A549 (cell line): ENCODE measurements at regions of chr2 and their contacts with region 1.

Region 1: GRCh38 chr2:234257856-234258561 is 207.5 kb downstream of the SPP2 start:
- DNase-seq: peak; percentile 94 to 97
- ATAC-seq: peak; percentile 99
- H3K4me3 ChIP-seq: no peak overlapping the region
- H3K27ac ChIP-seq: peak overlapping the region; percentile 93 to 95
- H3K4me1 ChIP-seq: peaks cover 51% of the 10 kb centered on the region
- CTCF ChIP-seq: peak; percentile 77
- EP300 ChIP-seq: peak; percentile 93 to 94
- POLR2A ChIP-seq: no peak
- RAD21 ChIP-seq: peak; percentile 93 to 95

Region 2: DNA sequence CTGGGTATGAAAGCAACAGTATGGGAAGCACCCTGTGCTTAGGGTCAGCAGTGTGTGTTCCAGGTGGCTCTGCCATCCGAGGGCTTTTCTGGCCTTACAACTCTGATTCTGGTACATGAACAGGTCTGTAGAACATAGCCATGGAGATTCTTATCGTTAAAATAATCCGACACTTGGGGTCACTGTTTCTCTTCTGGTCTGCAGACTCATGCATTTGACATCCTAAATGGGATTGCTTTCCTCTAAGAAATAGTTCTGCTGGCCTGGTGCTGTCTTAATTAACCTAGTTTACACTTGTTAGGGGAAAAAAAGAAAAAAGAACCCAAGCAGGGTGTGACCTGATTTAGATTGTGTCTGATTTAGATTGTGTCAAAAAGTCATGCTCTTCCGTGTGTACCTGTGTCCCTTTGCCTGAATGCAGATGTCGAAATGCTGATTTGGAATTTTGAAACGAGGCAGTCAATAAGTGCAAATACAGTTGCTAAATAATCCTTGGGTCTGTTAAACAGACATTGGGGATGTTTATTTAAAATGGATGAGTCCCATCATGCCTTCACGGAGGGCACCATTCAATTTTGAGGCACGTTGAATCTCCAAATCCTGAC is 281.2 kb before region 1 on chr2:
- CTCF ChIA-PET with region 1: interaction called, 15 read pairs
- POLR2A ChIA-PET with region 1: no interaction called
- DNase-seq: peak; percentile 64 to 84
- ATAC-seq: peak; percentile 44 to 80; a peak in 4 of 6 replicates
- H3K4me3 ChIP-seq: no peak overlapping the region
- H3K27ac ChIP-seq: peak overlapping the region; percentile 84 to 98
- H3K4me1 ChIP-seq: peaks cover 83% of the 10 kb centered on the region
- CTCF ChIP-seq: peak; percentile 94
- EP300 ChIP-seq: peak in 1 of 2 experiments; percentile 42; a peak in 2 of 5 replicates
- POLR2A ChIP-seq: no peak
- RAD21 ChIP-seq: peak; percentile 97 to 98

Region 3: DNA sequence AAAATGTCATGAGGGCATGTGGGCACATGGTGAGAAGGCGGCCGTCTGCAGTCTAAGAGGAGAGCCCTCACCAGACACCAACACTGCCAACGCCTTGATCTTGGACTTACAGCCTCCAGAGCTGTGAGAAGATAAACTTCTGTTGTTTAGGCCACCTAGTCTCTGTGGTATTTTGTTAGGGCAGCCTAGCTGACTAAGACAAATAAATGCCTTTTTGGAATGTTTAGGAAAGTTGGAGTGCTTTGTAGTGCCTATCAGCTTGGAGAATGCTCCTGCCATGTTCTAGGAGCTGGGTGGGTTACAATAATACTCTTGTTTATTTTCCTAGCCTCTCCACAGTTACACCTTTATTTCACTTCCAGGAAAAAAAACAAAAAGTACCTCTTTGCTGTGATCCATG is 115.5 kb before region 1 on chr2:
- CTCF ChIA-PET with region 1: interaction called, 11 read pairs
- POLR2A ChIA-PET with region 1: interaction called, 3 read pairs
- DNase-seq: no peak
- ATAC-seq: peak in 1 of 2 experiments; percentile 40; a peak in 2 of 6 replicates
- H3K4me3 ChIP-seq: no peak overlapping the region
- H3K27ac ChIP-seq: peak overlapping the region; percentile 32 to 67; a peak in 5 of 6 replicates
- H3K4me1 ChIP-seq: peaks cover 26% of the 10 kb centered on the region
- CTCF ChIP-seq: no peak
- EP300 ChIP-seq: no peak
- POLR2A ChIP-seq: no peak
- RAD21 ChIP-seq: no peak

Region 4: DNA sequence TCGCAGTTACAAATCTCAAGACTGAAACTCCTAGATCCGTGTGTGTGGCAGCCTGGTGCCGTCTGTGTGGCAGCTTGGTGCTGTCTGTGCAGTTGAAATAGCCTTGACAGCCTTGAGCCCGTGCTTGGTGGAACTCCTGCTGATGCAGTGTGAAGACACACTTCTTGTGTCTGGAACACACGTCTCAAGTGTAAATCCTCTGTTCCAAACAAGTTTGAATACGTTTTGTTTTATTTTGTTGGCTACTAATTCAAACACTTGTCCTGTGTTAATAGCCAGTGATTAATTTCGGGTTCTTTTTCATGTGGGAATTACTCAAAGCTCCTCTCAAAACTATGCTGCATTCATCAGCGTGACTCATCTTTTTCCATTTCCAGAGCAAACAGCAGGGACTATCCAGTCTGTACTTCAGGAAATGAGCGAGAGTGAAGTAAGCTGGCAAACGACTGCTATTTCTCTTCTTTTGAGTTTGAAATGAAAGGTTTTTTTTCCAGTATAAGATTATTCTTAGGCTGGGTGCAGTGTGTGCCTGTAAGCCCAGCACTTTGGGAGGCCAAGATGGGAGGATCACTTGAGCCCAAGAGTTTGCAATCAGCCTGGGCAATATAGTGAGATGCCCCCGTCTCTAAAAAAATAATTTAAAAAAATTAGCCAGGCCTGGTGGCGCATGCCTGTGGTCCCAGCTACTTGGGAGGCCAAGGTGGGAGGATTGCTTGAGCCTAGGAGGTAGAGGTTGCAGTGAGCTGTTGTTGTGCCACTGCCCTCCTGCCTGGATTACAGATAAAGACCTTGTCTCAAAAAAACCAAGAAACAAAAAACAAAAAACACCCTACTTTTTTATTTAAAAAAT is 54.6 kb before region 1 on chr2:
- CTCF ChIA-PET with region 1: interaction called, 12 read pairs
- POLR2A ChIA-PET with region 1: interaction called, 6 read pairs
- DNase-seq: peak; percentile 78 to 94
- ATAC-seq: peak; percentile 96 to 97
- H3K4me3 ChIP-seq: 0 out of 3 replicates have a peak overlapping the region, but pooled peaks have one; percentile 1
- H3K27ac ChIP-seq: peak overlapping the region; percentile 89 to 98
- H3K4me1 ChIP-seq: peaks cover 36% of the 10 kb centered on the region
- CTCF ChIP-seq: no peak
- EP300 ChIP-seq: peak; percentile 94
- POLR2A ChIP-seq: no peak
- RAD21 ChIP-seq: peak; percentile 49 to 63

Region 5: GRCh38 chr2:234241656-234242458 is 16.2 kb before region 1 on chr2:
- CTCF ChIA-PET with region 1: interaction called, 19 read pairs
- POLR2A ChIA-PET with region 1: no interaction called
- DNase-seq: peak; percentile 48 to 85
- ATAC-seq: peak; percentile 60 to 70
- H3K4me3 ChIP-seq: peak overlapping the region; percentile 4; the same call in 1 of the 3 replicates
- H3K27ac ChIP-seq: peak overlapping the region; percentile 89 to 93
- H3K4me1 ChIP-seq: peaks cover 57% of the 10 kb centered on the region
- CTCF ChIP-seq: no peak
- EP300 ChIP-seq: peak; percentile 48 to 56; a peak in 2 of 5 replicates
- POLR2A ChIP-seq: no peak
- RAD21 ChIP-seq: peak; percentile 37; a peak in 4 of 5 replicates

Region 6: GRCh38 chr2:234308813-234309195 is 50.8 kb after region 1 on chr2:
- CTCF ChIA-PET with region 1: interaction called, 12 read pairs
- POLR2A ChIA-PET with region 1: interaction called, 9 read pairs
- DNase-seq: peak; percentile 58 to 96
- ATAC-seq: peak; percentile 84 to 87
- H3K4me3 ChIP-seq: no peak overlapping the region
- H3K27ac ChIP-seq: peak overlapping the region; percentile 88 to 94
- H3K4me1 ChIP-seq: peaks cover 58% of the 10 kb centered on the region
- CTCF ChIP-seq: no peak
- EP300 ChIP-seq: peak; percentile 91 to 96
- POLR2A ChIP-seq: no peak
- RAD21 ChIP-seq: peak; percentile 51 to 65

Region 7: DNA sequence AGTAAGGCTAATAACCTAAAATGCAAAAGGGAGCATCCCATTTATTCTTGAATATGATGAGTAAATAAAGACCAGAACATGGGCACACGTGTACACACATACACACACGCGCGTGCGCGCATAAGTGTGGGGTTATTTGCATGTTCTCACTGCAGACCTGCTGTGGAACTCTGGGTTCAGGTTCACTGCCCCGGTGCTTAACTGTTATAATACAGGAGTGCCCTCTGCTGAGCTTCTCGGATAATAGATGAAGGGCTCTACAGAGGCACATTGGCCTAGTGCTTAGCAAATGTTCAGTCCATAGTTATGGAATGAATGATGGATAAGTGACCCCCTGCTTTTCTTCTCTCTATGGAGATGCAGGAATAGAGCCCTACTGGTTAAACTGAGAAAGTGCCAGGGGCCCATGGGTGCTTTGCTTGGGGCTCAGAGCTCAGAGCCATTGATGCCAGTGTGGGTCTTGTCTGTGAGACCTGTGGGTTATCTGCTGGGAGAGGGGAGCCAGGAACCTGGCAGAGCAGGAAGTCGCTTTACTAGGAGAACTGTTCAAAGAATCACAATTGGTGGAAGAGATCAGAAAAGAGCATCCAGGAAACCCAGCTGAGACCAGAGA is 242.5 kb after region 1 on chr2:
- CTCF ChIA-PET with region 1: interaction called, 10 read pairs
- POLR2A ChIA-PET with region 1: interaction called, 12 read pairs
- DNase-seq: peak in 1 of 2 experiments; percentile 83
- ATAC-seq: peak; percentile 45 to 73; a peak in 5 of 6 replicates
- H3K4me3 ChIP-seq: no peak overlapping the region
- H3K27ac ChIP-seq: peak overlapping the region; percentile 55 to 99
- H3K4me1 ChIP-seq: peaks cover 34% of the 10 kb centered on the region
- CTCF ChIP-seq: peak; percentile 87
- EP300 ChIP-seq: no peak
- POLR2A ChIP-seq: no peak
- RAD21 ChIP-seq: peak; percentile 98